ENCODE measurements at regions of chr1 and their contacts with region 1.

Region 1: DNA sequence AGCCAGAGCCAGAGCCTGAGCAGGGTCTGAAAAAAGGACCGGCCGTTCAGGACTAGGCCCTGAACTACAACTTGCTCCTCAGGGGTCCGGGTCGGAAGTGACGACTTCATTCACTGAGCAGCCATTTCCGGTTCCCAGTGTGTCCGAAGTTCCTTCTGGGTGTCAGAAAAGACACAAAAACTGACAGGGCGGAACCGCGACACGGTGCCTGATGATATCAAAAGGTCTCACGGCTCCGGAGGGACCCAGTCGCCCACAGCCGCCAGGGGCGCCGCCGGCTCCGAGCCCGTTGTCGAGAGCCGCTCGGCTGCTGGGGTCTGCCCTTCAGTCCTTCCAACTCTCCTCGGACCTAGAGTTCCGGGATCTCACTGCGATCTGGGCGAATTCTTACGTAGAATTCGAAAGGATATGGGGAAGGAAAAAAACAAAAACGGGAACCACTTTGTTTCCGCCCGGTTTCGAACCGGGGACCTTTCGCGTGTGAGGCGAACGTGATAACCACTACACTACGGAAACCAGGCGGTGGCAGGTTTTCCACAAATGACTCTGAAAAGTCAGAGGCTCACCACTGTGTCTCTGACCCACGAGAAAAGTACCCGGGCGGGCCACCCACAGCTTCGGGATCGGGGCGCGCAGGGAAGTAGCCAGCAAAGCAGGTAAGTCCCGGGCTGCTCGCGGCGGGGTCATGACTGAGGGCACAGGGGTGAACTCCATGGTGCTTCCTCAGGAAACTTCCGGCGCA is 31.8 kb upstream of the CFAP126 start:
- DNase-seq: peak; percentile 88
- H3K4me3 Mint-ChIP-seq: peak overlapping the region; percentile 94
- H3K27ac Mint-ChIP-seq: peak overlapping the region; percentile 100
- H3K4me1 Mint-ChIP-seq: peaks cover 50% of the 10 kb centered on the region
- H3K27me3 Mint-ChIP-seq: peaks cover 13% of the 10 kb centered on the region

Region 2: DNA sequence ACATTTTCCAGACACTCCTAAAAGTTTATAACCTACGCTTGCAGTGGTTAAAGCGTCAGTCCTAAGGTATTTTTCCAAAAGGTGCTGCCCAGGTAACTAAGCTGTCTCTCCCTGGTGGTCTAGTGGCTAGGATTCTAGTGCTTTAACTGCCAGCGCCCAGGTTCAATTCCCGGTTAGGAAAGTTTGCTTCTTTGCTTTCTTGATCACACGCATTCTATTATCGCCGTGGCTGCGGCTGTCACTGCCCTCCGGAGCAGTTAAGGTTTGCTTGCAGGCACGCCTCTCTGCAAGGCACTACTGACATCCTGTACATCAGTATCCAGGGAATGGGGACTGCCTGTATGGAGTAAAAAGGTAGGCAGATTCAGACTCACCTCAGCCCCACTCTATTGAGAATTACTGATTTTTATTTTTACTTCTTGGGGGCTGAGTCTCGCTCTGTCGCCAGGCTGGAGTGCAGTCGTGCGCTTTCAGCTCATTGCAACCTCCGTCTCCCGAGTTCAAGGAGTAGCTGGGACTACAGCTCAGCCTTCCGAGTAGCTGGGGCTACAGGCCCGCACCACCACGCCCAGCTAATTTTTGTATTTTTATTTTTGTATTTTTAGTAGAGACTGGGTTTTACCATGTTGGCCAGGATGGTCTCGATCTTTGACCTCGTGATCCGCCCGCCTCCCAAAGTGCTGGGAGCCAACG is 21.5 kb after region 1 on chr1:
- intact Hi-C with region 1: loop called (anchors 1 kb)
- DNase-seq: no peak
- H3K4me3 Mint-ChIP-seq: no peak overlapping the region
- H3K27ac Mint-ChIP-seq: no peak overlapping the region
- H3K4me1 Mint-ChIP-seq: peaks cover 6% of the 10 kb centered on the region
- H3K27me3 Mint-ChIP-seq: peaks cover 7% of the 10 kb centered on the region

Region 3: GRCh38 chr1:161427733-161428516 is 28.5 kb after region 1 on chr1:
- intact Hi-C with region 1: loop called (anchors 1 kb)
- DNase-seq: peak; percentile 22
- H3K4me3 Mint-ChIP-seq: peak overlapping the region; percentile 25
- H3K27ac Mint-ChIP-seq: peak overlapping the region; percentile 73
- H3K4me1 Mint-ChIP-seq: peaks cover 15% of the 10 kb centered on the region
- H3K27me3 Mint-ChIP-seq: peaks cover 35% of the 10 kb centered on the region

Region 4: DNA sequence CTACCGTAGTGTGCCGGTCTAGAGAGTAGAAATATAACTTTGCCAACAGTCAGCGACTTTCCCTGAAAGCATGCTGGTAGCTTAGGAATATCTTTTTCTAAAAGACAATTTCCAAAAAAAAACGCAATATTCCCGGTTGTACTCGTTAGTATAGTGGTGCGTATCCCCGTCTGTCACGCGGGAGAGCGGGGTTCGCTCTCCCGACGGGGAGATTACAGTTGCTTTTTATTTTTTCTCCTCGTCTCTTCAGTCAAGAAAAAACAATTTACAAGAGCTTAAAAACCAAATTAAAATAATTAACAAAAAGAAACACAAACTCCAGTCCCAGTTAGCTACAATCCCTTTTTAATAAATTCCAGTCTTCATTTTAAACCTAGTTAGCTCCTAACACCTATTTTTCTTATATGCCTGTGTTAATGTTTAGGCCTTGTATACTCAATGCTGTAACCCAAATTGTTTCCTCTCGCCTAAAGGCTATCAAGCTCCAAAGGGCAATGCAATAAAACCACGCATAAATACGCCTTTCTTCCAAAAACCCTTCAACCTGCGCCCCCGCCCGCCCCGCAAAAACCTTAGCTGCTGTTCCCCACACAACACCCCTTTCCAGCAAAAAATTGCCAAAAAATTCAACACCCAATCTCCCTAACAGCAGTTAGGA is 132.7 kb after region 1 on chr1:
- intact Hi-C with region 1: loop called (anchors 5 kb)
- DNase-seq: no peak
- H3K4me3 Mint-ChIP-seq: peak overlapping the region; percentile 22
- H3K27ac Mint-ChIP-seq: peak overlapping the region; percentile 58
- H3K4me1 Mint-ChIP-seq: peaks cover 23% of the 10 kb centered on the region
- H3K27me3 Mint-ChIP-seq: peaks cover 18% of the 10 kb centered on the region

Region 5: GRCh38 chr1:161738627-161739287 is 339.3 kb after region 1 on chr1:
- intact Hi-C with region 1: loop called (anchors 5 kb)
- DNase-seq: peak; percentile 54
- H3K4me3 Mint-ChIP-seq: no peak overlapping the region
- H3K27ac Mint-ChIP-seq: peak overlapping the region; percentile 20
- H3K4me1 Mint-ChIP-seq: peaks cover 41% of the 10 kb centered on the region
- H3K27me3 Mint-ChIP-seq: peaks cover 29% of the 10 kb centered on the region

Region 6: DNA sequence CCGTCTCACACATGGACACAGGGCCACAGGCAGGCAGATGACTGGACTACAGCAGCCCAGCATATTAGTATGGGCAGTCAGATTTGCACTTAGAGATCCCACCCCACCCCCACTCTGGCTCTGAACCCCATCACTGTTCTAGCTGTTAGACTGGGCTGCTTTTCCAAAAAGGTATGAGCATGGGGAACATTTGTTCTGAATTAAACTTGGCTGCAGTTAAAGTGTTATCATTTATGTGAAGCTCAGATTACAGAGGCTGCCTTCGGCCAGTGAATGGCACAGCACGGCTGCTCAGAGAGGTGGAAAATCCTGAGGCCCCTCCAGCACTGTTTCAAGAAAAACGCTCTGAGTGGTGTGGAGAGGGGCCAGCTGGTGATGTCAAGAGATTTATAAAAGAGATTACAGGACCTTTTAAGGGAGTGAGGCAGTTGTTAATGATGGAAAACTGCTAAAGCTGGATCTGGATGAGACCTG is 663.2 kb after region 1 on chr1:
- intact Hi-C with region 1: no loop called
- DNase-seq: no peak
- H3K4me3 Mint-ChIP-seq: no peak overlapping the region
- H3K27ac Mint-ChIP-seq: no peak overlapping the region
- H3K4me1 Mint-ChIP-seq: no peaks in the 10 kb centered on the region
- H3K27me3 Mint-ChIP-seq: peaks cover 35% of the 10 kb centered on the region

Measured in activated T-helper 1 cell treated with anti-CD3 and anti-CD28 coated beads, Interleukin-12 subunit alpha, Interleukin-12 subunit beta, Interleukin-2, Interleukin-4 antibody, amounts not matched to agents 30 ng/mL and 10 ng/mL and 1 ng/mL, durations not matched to agents 14 hours and 24 hours and 36 hours (primary cell).